Colonic mucosa (tissue), 4 donors: ENCODE measurements at regions of chr2 and their contacts with region 1.

Region 1: DNA sequence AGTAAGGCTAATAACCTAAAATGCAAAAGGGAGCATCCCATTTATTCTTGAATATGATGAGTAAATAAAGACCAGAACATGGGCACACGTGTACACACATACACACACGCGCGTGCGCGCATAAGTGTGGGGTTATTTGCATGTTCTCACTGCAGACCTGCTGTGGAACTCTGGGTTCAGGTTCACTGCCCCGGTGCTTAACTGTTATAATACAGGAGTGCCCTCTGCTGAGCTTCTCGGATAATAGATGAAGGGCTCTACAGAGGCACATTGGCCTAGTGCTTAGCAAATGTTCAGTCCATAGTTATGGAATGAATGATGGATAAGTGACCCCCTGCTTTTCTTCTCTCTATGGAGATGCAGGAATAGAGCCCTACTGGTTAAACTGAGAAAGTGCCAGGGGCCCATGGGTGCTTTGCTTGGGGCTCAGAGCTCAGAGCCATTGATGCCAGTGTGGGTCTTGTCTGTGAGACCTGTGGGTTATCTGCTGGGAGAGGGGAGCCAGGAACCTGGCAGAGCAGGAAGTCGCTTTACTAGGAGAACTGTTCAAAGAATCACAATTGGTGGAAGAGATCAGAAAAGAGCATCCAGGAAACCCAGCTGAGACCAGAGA is 3.6 kb upstream of the ARL4C start:
- DNase-seq: peak; percentile 50
- H3K4me3 ChIP-seq: no peak overlapping the region
- H3K27ac ChIP-seq: no peak overlapping the region
- H3K4me1 ChIP-seq: peaks cover 4% of the 10 kb centered on the region
- H3K27me3 ChIP-seq: peaks cover 7% of the 10 kb centered on the region
- CTCF ChIP-seq: peak; percentile 49

Region 2: DNA sequence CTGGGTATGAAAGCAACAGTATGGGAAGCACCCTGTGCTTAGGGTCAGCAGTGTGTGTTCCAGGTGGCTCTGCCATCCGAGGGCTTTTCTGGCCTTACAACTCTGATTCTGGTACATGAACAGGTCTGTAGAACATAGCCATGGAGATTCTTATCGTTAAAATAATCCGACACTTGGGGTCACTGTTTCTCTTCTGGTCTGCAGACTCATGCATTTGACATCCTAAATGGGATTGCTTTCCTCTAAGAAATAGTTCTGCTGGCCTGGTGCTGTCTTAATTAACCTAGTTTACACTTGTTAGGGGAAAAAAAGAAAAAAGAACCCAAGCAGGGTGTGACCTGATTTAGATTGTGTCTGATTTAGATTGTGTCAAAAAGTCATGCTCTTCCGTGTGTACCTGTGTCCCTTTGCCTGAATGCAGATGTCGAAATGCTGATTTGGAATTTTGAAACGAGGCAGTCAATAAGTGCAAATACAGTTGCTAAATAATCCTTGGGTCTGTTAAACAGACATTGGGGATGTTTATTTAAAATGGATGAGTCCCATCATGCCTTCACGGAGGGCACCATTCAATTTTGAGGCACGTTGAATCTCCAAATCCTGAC is 523.7 kb before region 1 on chr2:
- intact Hi-C with region 1: loop called (anchors 5 kb)
- DNase-seq: no peak
- H3K4me3 ChIP-seq: no peak overlapping the region
- H3K27ac ChIP-seq: no peak overlapping the region
- H3K4me1 ChIP-seq: no peaks in the 10 kb centered on the region
- H3K27me3 ChIP-seq: no peaks in the 10 kb centered on the region
- CTCF ChIP-seq: peak; percentile 16

Region 3: DNA sequence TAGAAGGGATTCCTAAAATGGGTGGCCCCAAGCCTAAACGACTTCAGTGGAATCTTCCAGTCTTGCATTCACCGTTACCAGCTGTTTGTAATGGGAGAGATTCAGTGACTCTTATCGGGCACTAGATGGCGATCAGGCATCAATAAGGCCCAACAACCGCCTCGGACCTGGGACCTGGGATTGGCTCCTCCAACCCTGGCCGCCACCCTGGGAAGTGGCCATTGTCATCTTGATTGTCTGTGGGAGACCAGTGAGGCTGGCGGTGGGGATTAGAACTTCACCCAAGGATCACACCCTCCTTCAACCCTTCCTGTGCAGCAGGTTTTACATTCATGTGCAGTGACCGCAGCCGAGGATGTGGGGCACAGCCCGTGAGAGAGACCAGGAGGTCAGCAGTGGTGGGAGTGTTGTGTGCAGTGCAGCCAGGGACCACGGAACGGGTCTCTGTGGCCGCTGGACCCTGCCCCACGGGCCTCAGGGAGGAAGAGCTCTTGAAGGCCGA is 364.7 kb before region 1 on chr2:
- intact Hi-C with region 1: loop called (anchors 2 kb)
- DNase-seq: peak; percentile 52
- H3K4me3 ChIP-seq: no peak overlapping the region
- H3K27ac ChIP-seq: no peak overlapping the region
- H3K4me1 ChIP-seq: no peaks in the 10 kb centered on the region
- H3K27me3 ChIP-seq: peaks cover 3% of the 10 kb centered on the region
- CTCF ChIP-seq: peak; percentile 70

Region 4: GRCh38 chr2:234288974-234289455 is 211.5 kb before region 1 on chr2:
- intact Hi-C with region 1: loop called (anchors 5 kb)
- DNase-seq: peak; percentile 79
- H3K4me3 ChIP-seq: no peak overlapping the region
- H3K27ac ChIP-seq: no peak overlapping the region
- H3K4me1 ChIP-seq: peaks cover 8% of the 10 kb centered on the region
- H3K27me3 ChIP-seq: no peaks in the 10 kb centered on the region
- CTCF ChIP-seq: peak; percentile 74

Region 5: DNA sequence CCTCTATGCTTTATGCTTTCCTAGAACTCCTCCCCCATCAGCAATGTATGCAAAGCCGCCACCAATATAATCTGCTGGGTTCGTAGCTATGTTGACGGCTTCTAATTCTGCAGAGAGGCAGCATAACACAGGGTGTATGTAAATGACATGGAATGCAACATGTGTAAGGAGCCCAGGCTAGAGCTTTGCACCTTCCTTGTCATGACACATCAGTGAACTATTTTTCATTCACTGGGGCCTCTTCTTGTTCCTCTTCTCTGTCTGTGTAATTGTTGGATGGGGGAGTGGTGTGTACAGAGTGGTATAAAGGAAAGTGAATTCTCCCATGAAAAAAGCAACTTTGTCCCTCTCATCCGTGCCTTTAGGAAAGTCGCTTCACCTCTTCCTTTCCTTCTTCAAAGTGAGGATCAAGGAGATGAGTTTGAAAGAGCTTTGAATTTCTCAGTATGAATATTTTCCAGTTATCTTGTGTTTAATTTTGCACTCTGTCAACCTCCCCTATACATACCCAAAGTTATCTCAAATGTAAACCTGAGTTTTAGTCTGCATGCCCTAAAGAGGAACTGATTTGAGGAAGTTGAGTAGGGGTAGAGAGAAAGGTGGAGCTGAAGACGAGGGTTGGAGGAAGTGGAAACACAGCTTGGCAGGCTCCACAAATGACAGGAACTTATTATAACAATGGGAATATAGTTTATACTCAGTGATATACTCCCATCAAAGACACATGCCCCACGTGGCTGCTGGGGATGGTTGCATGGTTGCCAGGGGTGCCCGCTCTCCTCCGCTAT is 71.3 kb after region 1 on chr2:
- intact Hi-C with region 1: no loop called
- DNase-seq: no peak
- H3K4me3 ChIP-seq: no peak overlapping the region
- H3K27ac ChIP-seq: no peak overlapping the region
- H3K4me1 ChIP-seq: no peaks in the 10 kb centered on the region
- H3K27me3 ChIP-seq: no peaks in the 10 kb centered on the region
- CTCF ChIP-seq: no peak

Region 6: GRCh38 chr2:234754126-234754525 is 253.6 kb after region 1 on chr2:
- intact Hi-C with region 1: no loop called
- DNase-seq: no peak
- H3K4me3 ChIP-seq: no peak overlapping the region
- H3K27ac ChIP-seq: no peak overlapping the region
- H3K4me1 ChIP-seq: no peaks in the 10 kb centered on the region
- H3K27me3 ChIP-seq: no peaks in the 10 kb centered on the region
- CTCF ChIP-seq: no peak

Region 7: GRCh38 chr2:235005603-235006259 is 505.2 kb after region 1 on chr2:
- intact Hi-C with region 1: no loop called
- DNase-seq: peak; percentile 68
- H3K4me3 ChIP-seq: no peak overlapping the region
- H3K27ac ChIP-seq: no peak overlapping the region
- H3K4me1 ChIP-seq: peaks cover 40% of the 10 kb centered on the region
- H3K27me3 ChIP-seq: no peaks in the 10 kb centered on the region
- CTCF ChIP-seq: no peak